CD4-positive, alpha-beta memory T cell (primary cell): ENCODE measurements at regions of chr5 and their contacts with region 1.

Region 1: GRCh38 chr5:149551200-149552037 is at the start of gene CSNK1A1:
- DNase-seq: peak; percentile 98 to 99 (median 99)
- H3K4me3 ChIP-seq: peak within 1 kb of the TSS; percentile 88 to 94
- H3K4me3 Mint-ChIP-seq: peak within 1 kb of the TSS; percentile 94 to 99 (median 98)
- H3K27ac ChIP-seq: peak within 1 kb of the TSS; percentile 97
- H3K27ac Mint-ChIP-seq: peak within 1 kb of the TSS; percentile 95 to 100 (median 98)
- H3K4me1 ChIP-seq: peaks cover 37% of the 10 kb centered on the region
- H3K4me1 Mint-ChIP-seq: peaks cover 18 to 52% (median 27%) of the 10 kb centered on the region in 4 donors
- H3K27me3 ChIP-seq: no peaks in the 10 kb centered on the region
- H3K27me3 Mint-ChIP-seq: no peaks in the 10 kb centered on the region
- total RNA-seq, gene CSNK1A1: 175 to 189 TPM

Region 2: DNA sequence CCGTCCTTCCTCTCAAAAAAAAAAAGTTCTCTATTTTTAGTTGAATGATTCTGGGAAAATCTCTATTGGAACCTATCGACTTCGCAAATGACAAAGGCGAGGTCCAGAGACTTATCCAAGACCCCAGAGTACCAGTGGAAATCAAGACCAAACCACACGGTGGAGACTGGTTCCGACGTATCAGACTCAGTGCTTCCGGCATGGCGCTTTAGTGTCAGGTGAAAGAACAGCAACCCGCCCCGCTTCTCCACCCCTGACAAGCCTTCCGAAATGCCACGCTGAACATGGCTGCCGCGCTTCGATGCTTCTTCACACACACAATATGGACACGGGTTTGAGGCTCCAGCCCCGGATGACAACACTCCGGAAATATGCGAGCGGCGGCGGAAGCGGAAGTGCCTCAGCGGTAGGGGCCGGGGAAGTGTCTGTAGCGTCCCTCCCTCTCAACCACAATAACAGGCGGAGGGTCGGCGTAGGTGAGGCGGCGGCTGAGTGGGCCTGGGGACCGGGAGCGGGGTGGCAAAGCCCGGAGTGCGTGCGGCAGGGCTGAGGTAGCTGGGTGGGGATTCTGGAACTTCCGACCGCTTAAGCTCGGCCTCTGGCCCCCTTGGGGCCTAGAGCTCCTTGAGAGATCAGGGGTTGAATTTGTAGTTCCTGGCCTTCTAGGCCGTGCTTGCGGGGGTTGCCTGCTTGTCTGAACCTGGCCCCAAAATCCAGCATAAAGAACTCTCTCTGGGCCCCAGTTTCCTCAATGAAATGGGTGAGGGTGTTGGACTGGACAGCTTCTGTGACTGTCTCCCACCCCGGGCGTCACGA is 1167.6 kb before region 1 on chr5 and contains the start of gene FBXO38:
- CTCF ChIA-PET with region 1: no interaction called
- POLR2A ChIA-PET with region 1: interaction called, 3 read pairs
- intact Hi-C with region 1: loop called (anchors 1 kb)
- DNase-seq: peak; percentile 97 to 99 (median 97)
- H3K4me3 ChIP-seq: peak within 1 kb of the TSS; percentile 82 to 86
- H3K4me3 Mint-ChIP-seq: peak within 1 kb of the TSS; percentile 86 to 97 (median 92)
- H3K27ac ChIP-seq: peak within 1 kb of the TSS; percentile 93
- H3K27ac Mint-ChIP-seq: peak within 1 kb of the TSS; percentile 90 to 100 (median 99)
- H3K4me1 ChIP-seq: peaks cover 47% of the 10 kb centered on the region
- H3K4me1 Mint-ChIP-seq: peaks cover 42 to 71% (median 59%) of the 10 kb centered on the region in 4 donors
- H3K27me3 ChIP-seq: no peaks in the 10 kb centered on the region
- H3K27me3 Mint-ChIP-seq: no peaks in the 10 kb centered on the region
- total RNA-seq, gene FBXO38: 77.3 to 78.3 TPM

Region 3: DNA sequence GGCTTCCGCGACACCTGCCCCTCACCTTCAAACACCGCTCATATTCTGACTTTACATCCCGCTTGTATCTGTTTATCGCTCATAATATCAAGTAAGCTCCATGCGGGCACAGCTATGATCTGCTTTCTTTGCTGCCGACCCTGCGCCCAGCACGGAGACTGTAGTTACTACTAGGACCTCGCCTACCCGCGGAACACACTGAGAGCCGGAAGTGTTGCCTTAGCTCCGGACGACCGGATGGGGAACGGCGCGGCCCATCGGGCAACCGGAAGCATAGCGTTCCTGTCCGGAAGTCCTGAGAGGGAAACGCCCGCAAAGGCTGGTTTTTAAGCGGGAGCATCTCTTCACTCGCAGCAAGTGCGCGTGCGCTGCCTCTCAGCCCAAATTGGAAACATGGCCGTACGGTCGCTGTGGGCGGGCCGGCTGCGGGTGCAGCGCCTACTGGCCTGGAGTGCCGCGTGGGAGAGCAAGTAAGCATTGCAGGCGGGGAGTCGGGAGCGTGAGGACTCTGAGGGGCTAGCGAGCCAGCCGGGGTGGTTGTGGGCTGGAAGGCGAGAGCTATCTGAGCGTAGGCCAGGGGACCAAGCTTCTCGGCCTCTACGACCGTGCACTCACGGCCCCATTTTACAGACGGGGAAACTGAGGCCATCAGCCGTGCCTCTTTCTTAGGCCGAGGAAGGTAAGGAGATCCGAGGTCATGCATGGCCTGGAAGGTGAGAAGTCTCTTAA is 206.1 kb before region 1 on chr5 and contains the start of gene GRPEL2:
- CTCF ChIA-PET with region 1: interaction called, 11 read pairs
- POLR2A ChIA-PET with region 1: interaction called, 18 read pairs
- intact Hi-C with region 1: loop called (anchors 2 kb)
- DNase-seq: peak; percentile 80 to 87 (median 82)
- H3K4me3 ChIP-seq: peak within 1 kb of the TSS; percentile 83 to 92
- H3K4me3 Mint-ChIP-seq: peak within 1 kb of the TSS; percentile 91 to 99 (median 96)
- H3K27ac ChIP-seq: peak within 1 kb of the TSS; percentile 78
- H3K27ac Mint-ChIP-seq: peak within 1 kb of the TSS; percentile 87 to 99 (median 93)
- H3K4me1 ChIP-seq: peaks cover 53% of the 10 kb centered on the region
- H3K4me1 Mint-ChIP-seq: peaks cover 36 to 67% (median 55%) of the 10 kb centered on the region in 4 donors
- H3K27me3 ChIP-seq: no peaks in the 10 kb centered on the region
- H3K27me3 Mint-ChIP-seq: no peaks in the 10 kb centered on the region
- total RNA-seq, gene GRPEL2: 39.4 to 41.9 TPM

Region 4: GRCh38 chr5:149442563-149443182 is 108.7 kb before region 1 on chr5:
- CTCF ChIA-PET with region 1: interaction called, 51 read pairs
- POLR2A ChIA-PET with region 1: interaction called, 6 read pairs
- intact Hi-C with region 1: no loop called
- DNase-seq: peak; percentile 45 to 53 (median 48)
- H3K4me3 ChIP-seq: no peak overlapping the region
- H3K4me3 Mint-ChIP-seq: no peak overlapping the region
- H3K27ac ChIP-seq: no peak overlapping the region
- H3K27ac Mint-ChIP-seq: peak overlapping the region in 1 of 7 donors; percentile 73
- H3K4me1 ChIP-seq: peaks cover 10% of the 10 kb centered on the region
- H3K4me1 Mint-ChIP-seq: peaks cover 8 to 14% (median 11%) of the 10 kb centered on the region in 4 donors
- H3K27me3 ChIP-seq: no peaks in the 10 kb centered on the region
- H3K27me3 Mint-ChIP-seq: no peaks in the 10 kb centered on the region

Region 5: DNA sequence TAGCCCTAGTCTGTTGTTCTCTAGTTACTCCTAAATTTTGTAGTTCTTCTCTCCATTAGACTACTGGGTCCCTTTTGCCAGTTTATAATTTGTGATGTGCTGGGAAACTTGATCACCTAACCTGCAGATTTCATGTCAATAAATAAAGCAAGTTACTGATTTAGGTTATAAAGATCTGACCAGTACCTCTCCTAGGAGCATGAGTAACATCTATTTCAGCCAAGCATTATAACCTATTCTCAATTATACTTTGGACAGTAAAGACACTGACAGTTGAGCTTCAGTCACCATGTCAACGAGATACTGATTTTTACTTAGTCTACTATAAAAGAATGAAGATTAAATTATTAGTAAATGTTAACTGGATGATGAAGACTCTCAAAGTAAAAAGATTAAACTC is 36.9 kb before region 1 on chr5:
- CTCF ChIA-PET with region 1: interaction called, 4 read pairs
- POLR2A ChIA-PET with region 1: interaction called, 5 read pairs
- intact Hi-C with region 1: loop called (anchors 5 kb)
- DNase-seq: no peak
- H3K4me3 ChIP-seq: no peak overlapping the region
- H3K4me3 Mint-ChIP-seq: no peak overlapping the region
- H3K27ac ChIP-seq: no peak overlapping the region
- H3K27ac Mint-ChIP-seq: peak overlapping the region in 5 of 7 donors; percentile 22 to 74 (median 59)
- H3K4me1 ChIP-seq: peaks cover 43% of the 10 kb centered on the region
- H3K4me1 Mint-ChIP-seq: peaks cover 29 to 46% (median 39%) of the 10 kb centered on the region in 4 donors
- H3K27me3 ChIP-seq: no peaks in the 10 kb centered on the region
- H3K27me3 Mint-ChIP-seq: no peaks in the 10 kb centered on the region

Region 6: GRCh38 chr5:150000256-150000989 is 449.0 kb after region 1 on chr5 and contains the starts of genes HMGXB3 and TIGD6:
- CTCF ChIA-PET with region 1: no interaction called
- POLR2A ChIA-PET with region 1: interaction called, 11 read pairs
- intact Hi-C with region 1: loop called (anchors 2 kb)
- DNase-seq: peak; percentile 75 to 84 (median 79)
- H3K4me3 ChIP-seq: peak within 1 kb of the TSS; percentile 85 to 86
- H3K4me3 Mint-ChIP-seq: peak within 1 kb of the TSS; percentile 94 to 99 (median 97)
- H3K27ac ChIP-seq: peak within 1 kb of the TSS; percentile 80
- H3K27ac Mint-ChIP-seq: peak within 1 kb of the TSS; percentile 81 to 99 (median 97)
- H3K4me1 ChIP-seq: peaks cover 28% of the 10 kb centered on the region
- H3K4me1 Mint-ChIP-seq: peaks cover 34 to 50% (median 44%) of the 10 kb centered on the region in 4 donors
- H3K27me3 ChIP-seq: no peaks in the 10 kb centered on the region
- H3K27me3 Mint-ChIP-seq: no peaks in the 10 kb centered on the region
- total RNA-seq, gene HMGXB3: 35.3 to 35.4 TPM
- total RNA-seq, gene TIGD6: 5.8 to 6.8 TPM